ENCODE measurements at regions of chr1 and their contacts with region 1.

Region 1: GRCh38 chr1:4894566-4894965 is 240.2 kb downstream of the AJAP1 start:
- DNase-seq: no peak
- H3K4me3 ChIP-seq: no peak overlapping the region
- H3K27ac ChIP-seq: no peak overlapping the region
- H3K4me1 ChIP-seq: no peaks in the 10 kb centered on the region
- H3K27me3 ChIP-seq: peaks cover 10% of the 10 kb centered on the region; the same call in 1 of the 2 replicates
- CTCF ChIP-seq: no peak

Region 2: GRCh38 chr1:3968851-3969250 is 925.7 kb before region 1 on chr1:
- CTCF ChIA-PET with region 1: no interaction called
- POLR2A ChIA-PET with region 1: interaction called, 10 read pairs
- intact Hi-C with region 1: no loop called
- DNase-seq: no peak
- H3K4me3 ChIP-seq: no peak overlapping the region
- H3K27ac ChIP-seq: no peak overlapping the region
- H3K4me1 ChIP-seq: no peaks in the 10 kb centered on the region
- H3K27me3 ChIP-seq: peaks cover 57% of the 10 kb centered on the region
- CTCF ChIP-seq: no peak